Sigmoid colon (tissue), 7 donors: ENCODE measurements at regions of chr10 and their contacts with region 1.

Region 1: GRCh38 chr10:118692872-118693271 is 61.9 kb downstream of the CACUL1 start:
- DNase-seq: no peak
- H3K4me3 ChIP-seq: no peak overlapping the region
- H3K27ac ChIP-seq: peak overlapping the region; percentile 52 to 79 (median 76)
- H3K4me1 ChIP-seq: peaks cover 0 to 51% (median 43%) of the 10 kb centered on the region in 4 donors
- H3K27me3 ChIP-seq: no peaks in the 10 kb centered on the region
- CTCF ChIP-seq: no peak
- EP300 ChIP-seq: no peak
- POLR2A ChIP-seq: no peak

Region 2: GRCh38 chr10:118571123-118571522 is 121.7 kb before region 1 on chr10:
- intact Hi-C with region 1: no loop called
- DNase-seq: peak; percentile 87
- H3K4me3 ChIP-seq: no peak overlapping the region
- H3K27ac ChIP-seq: peak overlapping the region; percentile 65 to 82 (median 78)
- H3K4me1 ChIP-seq: peaks cover 0 to 51% (median 48%) of the 10 kb centered on the region in 4 donors
- H3K27me3 ChIP-seq: no peaks in the 10 kb centered on the region
- CTCF ChIP-seq: no peak
- EP300 ChIP-seq: peak; percentile 16 to 79 (median 52)
- POLR2A ChIP-seq: no peak

Region 3: DNA sequence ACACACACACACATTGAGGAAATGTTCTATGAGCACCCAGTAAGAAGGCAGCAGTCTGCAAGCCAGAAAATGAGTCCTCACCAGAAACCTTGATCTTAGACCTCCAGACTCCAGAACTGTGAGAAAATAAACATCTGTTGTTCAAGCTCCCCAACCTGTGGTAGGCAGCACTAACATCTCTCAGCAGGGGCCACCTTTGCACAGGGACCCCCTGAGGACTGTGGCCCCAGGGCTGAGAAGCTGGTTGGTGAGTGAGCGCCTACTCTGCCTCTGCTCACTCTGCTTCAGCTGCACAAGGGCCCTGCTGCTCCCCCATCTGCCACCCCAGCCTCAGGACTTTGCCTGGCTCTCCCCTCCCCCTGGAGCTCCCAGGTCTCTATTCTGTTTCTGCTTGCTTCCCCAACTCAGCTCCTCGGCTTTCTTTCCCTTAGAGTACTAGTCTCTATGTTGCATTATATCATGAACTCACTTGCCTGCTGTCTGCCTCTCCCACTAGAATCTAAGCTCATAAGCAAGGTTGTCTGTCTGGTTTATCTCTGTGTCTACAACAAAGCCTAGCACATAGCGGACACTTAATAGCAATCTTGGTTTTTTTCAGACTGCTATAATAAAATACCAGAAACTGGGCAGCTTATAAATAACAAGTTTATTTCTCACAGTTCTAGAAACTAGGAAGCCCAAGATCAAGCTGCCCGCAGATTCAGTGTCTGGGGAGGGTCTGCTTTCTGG is 57.0 kb before region 1 on chr10:
- intact Hi-C with region 1: loop called (anchors 5 kb)
- DNase-seq: no peak
- H3K4me3 ChIP-seq: no peak overlapping the region
- H3K27ac ChIP-seq: peak overlapping the region in 3 of 4 donors; percentile 65 to 77 (median 76)
- H3K4me1 ChIP-seq: peaks cover 0 to 23% (median 14%) of the 10 kb centered on the region in 4 donors
- H3K27me3 ChIP-seq: no peaks in the 10 kb centered on the region
- CTCF ChIP-seq: no peak
- EP300 ChIP-seq: peak in 1 of 4 donors; percentile 48
- POLR2A ChIP-seq: no peak

Region 4: DNA sequence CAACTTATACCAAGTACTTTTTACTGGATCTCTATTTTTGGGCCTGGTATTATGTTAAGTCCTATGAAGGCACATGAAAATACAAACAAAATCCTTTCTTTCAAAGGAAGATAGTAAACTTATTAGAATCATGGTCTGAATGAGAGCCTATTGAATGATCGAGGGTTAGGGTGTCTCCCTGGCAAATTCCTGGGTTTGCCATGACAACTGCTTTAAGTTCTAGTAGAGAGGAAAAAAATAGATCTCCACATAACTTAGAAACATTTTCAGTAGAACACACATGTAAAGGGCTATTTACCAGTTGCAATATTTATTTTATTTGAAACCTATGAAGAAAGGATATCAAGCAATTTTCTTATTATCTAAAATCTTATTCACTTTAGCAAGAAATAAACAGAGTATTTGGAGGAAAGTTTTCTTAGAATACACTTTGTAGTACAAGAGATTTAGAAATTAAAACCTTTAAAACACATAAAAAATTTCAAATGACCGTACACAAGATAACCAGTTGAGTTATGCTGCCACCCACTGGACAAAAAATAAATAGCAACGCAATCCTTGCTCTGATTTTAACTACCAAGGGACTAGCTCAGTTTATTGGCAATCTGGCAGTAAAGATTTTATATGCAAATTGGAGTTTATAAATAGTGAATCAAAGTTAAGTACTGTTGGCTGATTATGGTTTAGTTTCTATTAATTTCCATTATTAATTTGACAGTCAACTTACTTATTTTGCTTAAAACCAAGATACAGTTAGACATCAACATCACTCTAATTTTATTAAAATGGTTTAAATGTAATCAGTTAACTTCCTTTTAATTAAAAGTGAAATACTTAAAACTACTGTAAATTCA is 28.0 kb after region 1 on chr10:
- intact Hi-C with region 1: no loop called
- DNase-seq: no peak
- H3K4me3 ChIP-seq: no peak overlapping the region
- H3K27ac ChIP-seq: no peak overlapping the region
- H3K4me1 ChIP-seq: peaks cover 0 to 26% (median 21%) of the 10 kb centered on the region in 4 donors
- H3K27me3 ChIP-seq: no peaks in the 10 kb centered on the region
- CTCF ChIP-seq: peak; percentile 63 to 87 (median 83)
- EP300 ChIP-seq: no peak
- POLR2A ChIP-seq: no peak

Region 5: GRCh38 chr10:118901380-118901779 is 208.5 kb after region 1 on chr10:
- intact Hi-C with region 1: no loop called
- DNase-seq: no peak
- H3K4me3 ChIP-seq: no peak overlapping the region
- H3K27ac ChIP-seq: no peak overlapping the region
- H3K4me1 ChIP-seq: no peaks in the 10 kb centered on the region
- H3K27me3 ChIP-seq: no peaks in the 10 kb centered on the region
- CTCF ChIP-seq: no peak
- EP300 ChIP-seq: no peak
- POLR2A ChIP-seq: no peak